Posterior vena cava (tissue), 2 donors: ENCODE measurements at regions of chr6 and their contacts with region 1.

Region 1: DNA sequence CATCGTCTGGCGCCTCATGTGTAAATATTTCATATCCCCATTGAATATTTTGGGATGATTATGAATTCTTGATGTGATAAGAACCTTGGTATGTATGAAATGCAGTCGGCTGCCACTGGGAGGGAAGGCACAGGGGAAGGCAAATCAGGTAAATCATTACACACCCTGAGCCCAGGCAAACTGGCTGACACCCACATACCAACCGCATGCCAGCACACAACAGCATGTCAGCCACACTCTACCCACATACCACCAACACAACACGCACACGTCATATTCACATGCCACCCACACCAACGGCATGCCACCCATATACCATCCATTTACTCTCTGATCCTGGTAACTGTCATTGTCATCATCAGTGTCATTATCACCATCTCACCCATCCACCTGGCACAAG is 28.3 kb upstream of the MDGA1 start:
- DNase-seq: no peak

Region 2: DNA sequence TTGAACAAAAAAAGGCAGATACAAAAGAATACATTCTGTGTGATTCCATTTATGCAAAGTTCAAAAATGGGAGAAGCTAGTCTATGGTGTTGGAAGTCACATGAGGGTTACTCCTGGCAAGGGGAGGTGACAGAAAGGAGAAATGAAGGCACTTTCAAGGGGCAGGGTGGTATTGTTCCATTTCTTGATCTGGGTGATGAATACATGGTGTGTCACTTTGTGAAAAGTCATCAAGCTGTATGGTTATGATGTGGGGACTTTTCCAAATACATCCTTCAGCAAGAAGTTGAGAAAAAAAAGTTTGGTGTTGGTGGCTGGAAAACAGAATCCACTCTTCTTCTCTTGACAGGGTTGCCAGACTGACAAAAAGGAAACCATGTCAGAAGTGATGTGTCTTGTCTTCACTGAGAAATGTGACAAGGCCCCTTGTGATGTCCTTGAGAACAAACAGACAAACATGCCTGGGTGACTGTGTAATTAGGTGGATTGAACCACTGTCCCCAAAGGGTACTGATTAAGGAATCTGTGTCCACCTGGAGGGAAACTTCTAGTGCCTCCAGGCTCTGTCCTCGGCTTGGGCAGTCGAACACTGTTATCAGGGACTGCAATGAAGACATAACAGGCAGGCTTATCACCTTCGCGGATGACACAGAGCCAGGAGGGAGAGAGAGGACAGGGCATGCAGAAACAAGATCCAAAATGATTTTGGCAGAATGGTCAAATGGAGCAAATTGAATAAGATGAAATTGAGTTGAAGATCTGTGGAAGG is 32.5 kb after region 1 on chr6:
- intact Hi-C with region 1: loop called in 1 of 2 experiments (anchors 1 kb)
- DNase-seq: no peak